SK-N-SH (cell line): ENCODE measurements at regions of chr2 and their contacts with region 1.

Region 1: GRCh38 chr2:169109502-169110409 is 40.4 kb downstream of the DHRS9 start:
- DNase-seq: peak; percentile 78
- H3K4me3 ChIP-seq: peak overlapping the region in 1 of 2 experiments; percentile 26; a peak in 1 of 4 replicates
- H3K27ac ChIP-seq: no peak overlapping the region
- H3K4me1 ChIP-seq: no peaks in the 10 kb centered on the region; a peak in 1 of 4 replicates
- H3K27me3 ChIP-seq: no peaks in the 10 kb centered on the region
- CTCF ChIP-seq: peak; percentile 94
- EP300 ChIP-seq: no peak
- RAD21 ChIP-seq: peak; percentile 88

Region 2: DNA sequence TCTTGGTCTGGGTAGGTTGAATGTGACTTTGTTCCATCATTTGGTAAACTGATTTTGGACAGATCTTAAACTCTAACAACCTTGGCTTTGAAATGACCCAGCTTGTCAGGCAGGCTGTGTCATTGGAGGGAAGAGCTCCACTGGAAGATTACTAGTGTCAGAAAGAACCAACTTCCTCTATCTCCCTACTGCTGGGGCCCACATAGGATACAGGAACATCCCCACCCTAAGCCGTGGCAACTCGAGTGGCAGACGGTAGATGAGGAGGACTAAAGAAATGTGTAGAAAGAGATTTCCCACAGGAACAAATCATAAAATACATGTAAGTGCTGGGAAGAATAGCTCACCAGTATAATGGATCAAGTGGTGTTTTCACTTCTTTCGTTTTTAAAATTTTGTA is 213.0 kb before region 1 on chr2:
- CTCF ChIA-PET with region 1: no interaction called
- POLR2A ChIA-PET with region 1: no interaction called
- DNase-seq: no peak
- H3K4me3 ChIP-seq: no peak overlapping the region
- H3K27ac ChIP-seq: no peak overlapping the region
- H3K4me1 ChIP-seq: no peaks in the 10 kb centered on the region
- H3K27me3 ChIP-seq: no peaks in the 10 kb centered on the region
- CTCF ChIP-seq: no peak
- EP300 ChIP-seq: no peak
- RAD21 ChIP-seq: no peak

Region 3: GRCh38 chr2:169082995-169083394 is 26.8 kb before region 1 on chr2:
- CTCF ChIA-PET with region 1: interaction called, 10 read pairs
- POLR2A ChIA-PET with region 1: no interaction called
- DNase-seq: no peak
- H3K4me3 ChIP-seq: no peak overlapping the region
- H3K27ac ChIP-seq: no peak overlapping the region
- H3K4me1 ChIP-seq: no peaks in the 10 kb centered on the region
- H3K27me3 ChIP-seq: no peaks in the 10 kb centered on the region
- CTCF ChIP-seq: no peak
- EP300 ChIP-seq: no peak
- RAD21 ChIP-seq: no peak

Region 4: DNA sequence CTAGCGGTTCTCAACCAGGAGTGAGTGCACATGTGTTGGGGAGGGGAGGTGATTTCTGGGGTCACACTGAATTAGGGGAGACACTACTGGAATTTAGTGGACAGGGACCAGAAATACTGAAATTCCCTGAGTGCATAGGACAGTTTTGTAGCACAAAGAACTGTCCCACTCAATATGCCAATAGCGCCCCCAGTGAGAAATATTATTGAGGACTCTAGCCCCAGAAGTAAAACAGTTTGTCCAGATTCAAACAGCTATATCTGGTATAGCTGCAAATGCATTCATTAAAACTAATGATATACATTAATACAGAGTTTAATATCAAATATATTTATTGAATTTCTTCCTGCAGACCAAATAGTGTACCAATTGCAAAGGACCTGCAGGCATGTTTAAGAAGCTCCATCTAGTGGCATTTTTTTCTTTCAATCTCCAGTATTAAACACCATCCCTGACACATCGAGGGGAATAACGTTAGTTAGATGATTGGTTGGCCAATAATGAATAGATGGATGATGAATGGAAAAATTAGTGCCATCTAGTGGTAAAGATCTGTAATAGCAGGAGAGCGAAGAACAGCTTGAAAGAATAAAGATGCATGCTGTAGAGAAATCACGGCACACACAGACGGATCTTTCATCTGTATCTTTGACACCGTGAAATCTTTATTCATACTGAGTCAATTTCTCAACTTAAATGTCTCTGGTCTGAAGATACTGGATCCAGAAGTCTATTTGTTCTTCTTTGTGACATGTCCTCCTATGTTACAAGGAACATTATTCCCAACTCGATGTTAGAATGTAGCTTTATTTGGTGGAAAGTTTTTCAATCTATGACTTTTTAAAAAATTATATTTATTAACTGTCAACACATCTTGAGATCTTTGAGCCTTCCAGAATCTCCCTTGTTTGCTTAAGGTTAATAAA is 22.1 kb after region 1 on chr2:
- CTCF ChIA-PET with region 1: interaction called, 78 read pairs
- POLR2A ChIA-PET with region 1: no interaction called
- DNase-seq: peak; percentile 51
- H3K4me3 ChIP-seq: no peak overlapping the region; a peak in 1 of 4 replicates
- H3K27ac ChIP-seq: no peak overlapping the region
- H3K4me1 ChIP-seq: no peaks in the 10 kb centered on the region
- H3K27me3 ChIP-seq: peaks cover 3% of the 10 kb centered on the region; the same call in 1 of the 2 replicates
- CTCF ChIP-seq: peak; percentile 81
- EP300 ChIP-seq: no peak
- RAD21 ChIP-seq: peak; percentile 51

Region 5: GRCh38 chr2:169221745-169222369 is 112.1 kb after region 1 on chr2:
- CTCF ChIA-PET with region 1: interaction called, 44 read pairs
- POLR2A ChIA-PET with region 1: no interaction called
- DNase-seq: peak; percentile 14
- H3K4me3 ChIP-seq: peak overlapping the region in 1 of 2 experiments; percentile 16; a peak in 1 of 4 replicates
- H3K27ac ChIP-seq: no peak overlapping the region
- H3K4me1 ChIP-seq: no peaks in the 10 kb centered on the region
- H3K27me3 ChIP-seq: no peaks in the 10 kb centered on the region
- CTCF ChIP-seq: peak; percentile 60
- EP300 ChIP-seq: no peak
- RAD21 ChIP-seq: peak; percentile 55

Region 6: DNA sequence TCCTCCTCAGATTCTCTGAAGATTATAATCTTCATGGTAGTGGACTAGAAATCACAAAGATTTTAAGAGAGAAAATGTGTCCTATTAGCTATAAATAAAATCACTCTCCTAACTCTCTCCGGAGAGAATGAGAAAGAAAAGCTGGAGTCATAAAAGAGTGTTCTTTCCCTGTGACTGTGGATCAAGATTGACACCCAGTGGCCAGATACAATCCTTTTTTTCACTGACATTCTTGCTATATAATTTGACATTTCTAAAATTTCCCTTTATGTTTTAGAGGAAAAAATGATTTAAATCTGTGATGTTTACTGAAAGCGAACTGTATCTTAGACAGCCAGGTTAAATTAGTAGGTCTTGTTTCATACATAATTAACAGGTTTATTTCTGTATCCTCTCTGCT is 287.9 kb after region 1 on chr2:
- CTCF ChIA-PET with region 1: interaction called, 18 read pairs
- POLR2A ChIA-PET with region 1: no interaction called
- DNase-seq: peak; percentile 25
- H3K4me3 ChIP-seq: no peak overlapping the region
- H3K27ac ChIP-seq: no peak overlapping the region
- H3K4me1 ChIP-seq: peaks cover 0 to 4% of the 10 kb centered on the region in 2 experiments; a peak in 2 of 4 replicates
- H3K27me3 ChIP-seq: no peaks in the 10 kb centered on the region; the same call in 1 of the 2 replicates
- CTCF ChIP-seq: peak; percentile 33
- EP300 ChIP-seq: no peak
- RAD21 ChIP-seq: peak; percentile 65